ENCODE measurements at regions of chr14 and their contacts with region 1.

Region 1: GRCh38 chr14:70714055-70714621 is 72.4 kb downstream of the TTC9 start:
- DNase-seq: peak; percentile 54
- ATAC-seq: peak; percentile 47
- H3K4me3 ChIP-seq: no peak overlapping the region
- H3K27ac ChIP-seq: no peak overlapping the region
- H3K4me1 ChIP-seq: peaks cover 0 to 20% of the 10 kb centered on the region in 2 experiments; a peak in 2 of 4 replicates
- H3K27me3 ChIP-seq: no peaks in the 10 kb centered on the region
- CTCF ChIP-seq: peak; percentile 58 to 70 (median 69)
- POLR2A ChIP-seq: no peak
- RAD21 ChIP-seq: peak; percentile 72

Region 2: GRCh38 chr14:70622111-70622712 is 91.9 kb before region 1 on chr14:
- CTCF ChIA-PET with region 1: interaction called, 33 read pairs
- POLR2A ChIA-PET with region 1: no interaction called
- RAD21 ChIA-PET with region 1: no interaction called
- intact Hi-C with region 1: loop called (anchors 1 kb)
- DNase-seq: peak; percentile 53
- ATAC-seq: peak; percentile 98
- H3K4me3 ChIP-seq: no peak overlapping the region
- H3K27ac ChIP-seq: no peak overlapping the region
- H3K4me1 ChIP-seq: no peaks in the 10 kb centered on the region
- H3K27me3 ChIP-seq: no peaks in the 10 kb centered on the region
- CTCF ChIP-seq: peak; percentile 81 to 89 (median 88)
- POLR2A ChIP-seq: no peak
- RAD21 ChIP-seq: peak; percentile 91